Heart right ventricle (tissue), 16 donors: ENCODE measurements at regions of chr7 and their contacts with region 1.

Region 1: DNA sequence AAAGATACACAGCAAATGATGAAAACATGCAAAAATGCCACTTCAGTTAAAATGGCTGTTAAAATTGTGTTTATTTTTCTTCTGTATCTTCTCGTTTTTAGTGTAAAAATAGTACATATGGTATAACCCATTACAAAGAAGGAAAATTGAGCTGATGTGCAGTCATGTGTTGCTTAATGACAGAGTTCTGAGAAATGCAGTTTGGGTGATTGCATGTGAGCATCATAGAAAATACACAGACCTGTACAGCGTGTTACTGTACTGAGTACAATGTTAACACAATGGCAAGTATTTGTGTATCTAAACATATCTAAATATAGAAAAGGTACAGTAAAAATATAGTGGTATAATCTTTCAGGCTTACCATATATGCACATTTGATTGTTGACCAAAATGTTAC is 7.3 kb downstream of the DMTF1 start:
- DNase-seq: no peak
- ATAC-seq: no peak
- H3K4me3 ChIP-seq: no peak overlapping the region
- H3K27ac ChIP-seq: no peak overlapping the region
- H3K4me1 ChIP-seq: peaks cover 0 to 55% (median 44%) of the 10 kb centered on the region in 9 donors
- H3K27me3 ChIP-seq: no peaks in the 10 kb centered on the region
- CTCF ChIP-seq: no peak

Region 2: DNA sequence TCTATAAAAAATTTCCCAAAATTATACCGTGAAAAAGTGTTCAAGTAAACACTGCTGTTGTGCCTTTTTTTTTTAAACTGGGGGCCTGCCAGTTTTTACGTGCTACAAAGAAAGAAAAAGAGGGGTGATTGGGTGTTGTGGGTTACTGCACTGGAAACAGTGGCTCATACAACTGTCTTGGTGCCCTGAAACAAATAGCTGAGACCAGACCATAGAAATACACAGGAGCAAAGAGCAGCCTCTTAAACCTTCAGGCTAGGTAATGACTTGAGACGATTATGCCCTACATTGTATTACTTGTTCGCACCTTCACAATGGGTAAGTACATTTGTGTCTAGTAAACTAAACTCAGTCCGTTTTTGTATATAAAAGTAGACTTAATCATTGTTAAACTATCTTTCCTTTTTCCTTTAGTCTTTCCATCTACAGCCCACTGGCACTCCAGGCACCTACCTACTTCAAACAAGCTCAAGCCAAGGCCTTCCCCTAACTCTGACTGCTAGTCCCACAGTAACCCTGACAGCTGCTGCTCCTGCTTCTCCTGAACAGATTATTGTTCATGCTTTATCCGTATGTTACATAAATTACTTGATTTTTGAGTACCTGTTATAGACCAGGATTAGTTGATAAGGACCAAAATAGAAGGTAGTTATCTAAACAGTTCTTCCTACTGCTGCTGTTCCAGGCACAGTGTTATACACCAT is 33.4 kb after region 1 on chr7:
- intact Hi-C with region 1: loop called in 2 of 10 experiments (anchors 5 kb)
- DNase-seq: no peak
- ATAC-seq: peak in 1 of 8 donors; percentile 17
- H3K4me3 ChIP-seq: no peak overlapping the region
- H3K27ac ChIP-seq: no peak overlapping the region
- H3K4me1 ChIP-seq: no peaks in the 10 kb centered on the region
- H3K27me3 ChIP-seq: no peaks in the 10 kb centered on the region
- CTCF ChIP-seq: no peak

Region 3: DNA sequence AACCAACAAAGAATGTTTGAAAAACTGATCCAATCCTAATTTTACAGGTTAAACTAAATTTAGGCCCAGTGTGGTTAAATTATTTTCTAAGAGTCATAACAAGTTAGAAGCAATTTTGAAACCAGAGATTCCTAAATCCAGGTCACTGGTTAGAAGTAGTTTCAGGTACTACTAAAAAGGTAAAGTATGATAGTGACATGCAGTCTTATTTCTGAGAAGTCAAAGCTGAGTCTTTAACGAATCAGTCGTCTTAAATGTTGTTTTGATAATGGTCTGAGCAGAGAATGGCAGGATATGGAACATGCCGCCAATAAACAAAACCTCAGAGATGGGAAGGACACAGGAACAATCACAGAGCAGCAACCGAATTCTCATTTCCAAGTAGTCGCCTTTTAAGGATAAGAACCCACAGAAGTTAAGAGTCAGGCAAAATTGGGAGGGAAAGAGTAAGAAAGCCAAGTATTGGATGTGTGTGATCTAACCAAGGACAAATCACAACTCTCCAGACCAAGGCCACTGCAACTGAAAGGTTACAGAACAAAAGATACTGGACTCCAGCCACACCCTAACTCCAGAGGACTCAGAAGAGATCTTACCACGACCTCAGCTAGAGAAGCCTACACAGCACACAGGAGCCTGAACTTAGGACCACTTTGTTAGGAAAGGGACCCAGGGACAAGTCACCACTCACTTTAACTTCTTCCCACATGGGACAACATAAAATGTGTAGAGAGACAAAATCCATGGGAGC is 40.3 kb after region 1 on chr7:
- intact Hi-C with region 1: loop called in 1 of 10 experiments (anchors 5 kb)
- DNase-seq: no peak
- ATAC-seq: peak in 7 of 8 donors; percentile 25 to 61 (median 41)
- H3K4me3 ChIP-seq: no peak overlapping the region
- H3K27ac ChIP-seq: peak overlapping the region in 3 of 10 donors; percentile 8 to 49 (median 15)
- H3K4me1 ChIP-seq: peaks cover 0 to 41% (median 19%) of the 10 kb centered on the region in 9 donors
- H3K27me3 ChIP-seq: no peaks in the 10 kb centered on the region
- CTCF ChIP-seq: no peak

Region 4: DNA sequence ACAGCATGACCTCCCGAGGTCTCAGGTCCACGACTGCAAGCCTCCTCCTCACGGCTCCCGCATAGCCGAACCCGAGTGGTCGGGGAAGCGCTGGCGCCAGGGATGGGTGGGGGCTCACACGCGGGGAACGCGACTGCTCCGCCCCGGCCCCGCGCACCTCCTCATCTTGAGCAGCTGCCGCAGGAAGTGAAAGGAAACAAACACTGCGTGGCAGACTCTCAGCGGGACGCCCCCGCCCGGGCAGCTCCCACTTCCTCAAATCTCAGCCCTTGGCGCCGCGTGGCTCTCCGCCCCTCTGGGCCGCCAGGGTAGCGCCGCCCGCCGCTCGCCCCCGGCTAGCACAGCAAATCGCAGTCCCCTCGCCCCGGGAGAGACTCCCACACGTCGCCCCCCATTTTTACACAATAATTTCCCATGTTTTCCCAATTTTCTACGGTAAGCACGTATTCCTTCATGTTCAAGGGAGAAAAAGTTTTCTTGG is 60.0 kb after region 1 on chr7 and contains the start of gene TMEM243:
- intact Hi-C with region 1: loop called in 5 of 10 experiments (anchors 2 to 10 kb)
- DNase-seq: peak; percentile 79 to 80
- ATAC-seq: peak; percentile 90 to 94 (median 92)
- H3K4me3 ChIP-seq: peak within 1 kb of the TSS; percentile 53 to 93 (median 82)
- H3K27ac ChIP-seq: peak within 1 kb of the TSS; percentile 37 to 92 (median 86)
- H3K4me1 ChIP-seq: peaks cover 0 to 49% (median 22%) of the 10 kb centered on the region in 9 donors
- H3K27me3 ChIP-seq: peaks cover 0 to 33% (median 4%) of the 10 kb centered on the region in 7 donors
- CTCF ChIP-seq: peak in 4 of 9 donors; percentile 22 to 37 (median 33)
- total RNA-seq, gene TMEM243: 2.1 to 7.0 (median 3.9) TPM